ENCODE measurements at regions of chr15 and their contacts with region 1.

Region 1: DNA sequence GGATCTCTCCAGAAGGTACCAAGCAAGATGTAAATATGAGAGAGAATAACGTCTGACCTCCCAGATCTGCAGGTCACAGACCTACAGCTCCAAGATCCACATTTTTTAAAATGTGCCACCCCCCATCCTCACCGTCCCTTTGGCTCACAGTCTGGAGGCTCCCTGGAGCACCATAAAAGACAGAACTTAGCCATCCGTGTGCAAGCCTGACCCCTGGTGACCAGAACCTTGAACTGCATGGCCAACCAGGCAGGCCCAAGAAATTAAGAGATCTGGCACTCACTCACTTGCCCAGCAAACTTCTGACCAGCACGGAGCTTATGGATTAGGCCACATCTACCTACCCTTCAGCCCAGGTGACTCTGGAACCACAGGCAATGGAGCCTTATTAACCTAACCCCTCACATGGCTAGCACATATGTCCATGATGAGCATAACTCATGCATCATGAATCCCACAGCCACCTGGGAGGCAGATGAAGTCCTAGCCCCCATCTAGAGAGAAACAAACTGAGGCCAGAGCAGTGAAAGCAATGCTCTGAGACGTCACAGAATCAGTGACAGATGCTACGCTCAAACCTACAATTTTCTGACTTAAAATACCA is 275.3 kb downstream of the UACA start:
- DNase-seq: peak; percentile 84
- ATAC-seq: no peak
- H3K4me3 Mint-ChIP-seq: no peak overlapping the region
- H3K27ac Mint-ChIP-seq: no peak overlapping the region
- H3K4me1 Mint-ChIP-seq: peaks cover 57% of the 10 kb centered on the region
- H3K27me3 Mint-ChIP-seq: peaks cover 31% of the 10 kb centered on the region

Region 2: DNA sequence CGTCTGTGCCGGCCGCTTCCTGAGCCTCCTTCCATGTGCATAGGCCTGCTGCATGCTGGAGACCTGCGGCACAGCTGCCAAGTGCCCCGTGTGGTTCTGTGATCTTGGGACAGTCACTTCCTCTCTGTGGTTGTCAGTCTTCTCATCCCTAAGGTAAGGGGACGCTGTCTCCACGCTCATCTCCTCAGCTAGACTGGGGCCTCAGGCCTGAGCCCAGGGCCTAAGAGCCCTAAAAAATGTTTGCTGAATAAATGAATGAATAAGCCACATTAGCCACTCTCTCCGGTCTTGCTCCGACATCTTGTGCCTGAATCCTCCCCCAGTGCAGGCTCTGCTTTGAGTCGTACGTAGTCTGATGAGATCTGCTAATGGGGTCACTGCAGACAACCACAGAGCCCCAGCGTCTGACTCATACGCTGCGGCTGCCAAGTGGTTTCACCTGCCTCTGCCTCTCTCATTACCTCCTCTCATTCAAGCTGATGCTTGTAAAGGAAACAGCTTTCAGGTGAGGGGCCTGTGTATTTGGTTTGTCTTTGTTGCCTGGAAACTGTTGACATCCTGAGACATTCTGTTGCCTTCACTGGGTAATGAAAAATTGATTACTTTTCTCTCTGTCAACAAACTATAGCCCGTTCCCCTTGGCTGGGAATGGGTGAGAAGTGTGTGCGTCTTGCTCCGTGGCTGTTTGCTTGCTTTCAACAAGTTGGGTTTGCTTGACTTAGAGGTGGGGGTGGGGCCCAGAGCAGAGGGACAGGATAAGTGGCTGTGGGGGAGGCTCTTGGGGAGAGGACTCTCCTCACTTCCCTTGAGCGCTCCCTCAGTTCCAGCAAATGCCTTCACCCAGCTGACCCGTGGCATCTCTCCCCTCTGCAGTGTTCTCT is 1019.6 kb before region 1 on chr15:
- CTCF ChIA-PET with region 1: no interaction called
- POLR2A ChIA-PET with region 1: no interaction called
- intact Hi-C with region 1: loop called (anchors 2 kb)
- DNase-seq: peak; percentile 91
- ATAC-seq: peak; percentile 94
- H3K4me3 Mint-ChIP-seq: peak overlapping the region; percentile 59
- H3K27ac Mint-ChIP-seq: peak overlapping the region; percentile 85
- H3K4me1 Mint-ChIP-seq: peaks cover 27% of the 10 kb centered on the region
- H3K27me3 Mint-ChIP-seq: no peaks in the 10 kb centered on the region

Region 3: GRCh38 chr15:69755551-69756310 is 732.4 kb before region 1 on chr15:
- CTCF ChIA-PET with region 1: interaction called, 3 read pairs
- POLR2A ChIA-PET with region 1: interaction called, 7 read pairs
- intact Hi-C with region 1: loop called (anchors 1 kb)
- DNase-seq: peak; percentile 91
- ATAC-seq: peak; percentile 67
- H3K4me3 Mint-ChIP-seq: peak overlapping the region; percentile 40
- H3K27ac Mint-ChIP-seq: peak overlapping the region; percentile 93
- H3K4me1 Mint-ChIP-seq: peaks cover 94% of the 10 kb centered on the region
- H3K27me3 Mint-ChIP-seq: peaks cover 9% of the 10 kb centered on the region

Region 4: GRCh38 chr15:70259028-70259424 is 229.1 kb before region 1 on chr15:
- CTCF ChIA-PET with region 1: no interaction called
- POLR2A ChIA-PET with region 1: no interaction called
- intact Hi-C with region 1: loop called in 1 of 2 experiments (anchors 5 kb)
- DNase-seq: peak; percentile 54
- ATAC-seq: peak; percentile 17
- H3K4me3 Mint-ChIP-seq: peak overlapping the region; percentile 15
- H3K27ac Mint-ChIP-seq: peak overlapping the region; percentile 57
- H3K4me1 Mint-ChIP-seq: peaks cover 32% of the 10 kb centered on the region
- H3K27me3 Mint-ChIP-seq: peaks cover 3% of the 10 kb centered on the region

Region 5: GRCh38 chr15:70466895-70467529 is 21.1 kb before region 1 on chr15:
- CTCF ChIA-PET with region 1: interaction called, 27 read pairs
- POLR2A ChIA-PET with region 1: no interaction called
- intact Hi-C with region 1: no loop called
- DNase-seq: peak; percentile 71
- ATAC-seq: peak; percentile 89
- H3K4me3 Mint-ChIP-seq: no peak overlapping the region
- H3K27ac Mint-ChIP-seq: no peak overlapping the region
- H3K4me1 Mint-ChIP-seq: peaks cover 2% of the 10 kb centered on the region
- H3K27me3 Mint-ChIP-seq: peaks cover 20% of the 10 kb centered on the region

Region 6: GRCh38 chr15:70512772-70513362 is 24.8 kb after region 1 on chr15:
- CTCF ChIA-PET with region 1: interaction called, 8 read pairs
- POLR2A ChIA-PET with region 1: interaction called, 3 read pairs
- intact Hi-C with region 1: loop called in 1 of 2 experiments (anchors 2 kb)
- DNase-seq: peak; percentile 89
- ATAC-seq: peak; percentile 88
- H3K4me3 Mint-ChIP-seq: no peak overlapping the region
- H3K27ac Mint-ChIP-seq: no peak overlapping the region
- H3K4me1 Mint-ChIP-seq: peaks cover 25% of the 10 kb centered on the region
- H3K27me3 Mint-ChIP-seq: peaks cover 2% of the 10 kb centered on the region

Measured in activated CD4-positive, alpha-beta T cell treated with anti-CD3 and anti-CD28 coated beads for 36 hours (primary cell).